ENCODE measurements at regions of chr1 and their contacts with region 1.

Region 1: DNA sequence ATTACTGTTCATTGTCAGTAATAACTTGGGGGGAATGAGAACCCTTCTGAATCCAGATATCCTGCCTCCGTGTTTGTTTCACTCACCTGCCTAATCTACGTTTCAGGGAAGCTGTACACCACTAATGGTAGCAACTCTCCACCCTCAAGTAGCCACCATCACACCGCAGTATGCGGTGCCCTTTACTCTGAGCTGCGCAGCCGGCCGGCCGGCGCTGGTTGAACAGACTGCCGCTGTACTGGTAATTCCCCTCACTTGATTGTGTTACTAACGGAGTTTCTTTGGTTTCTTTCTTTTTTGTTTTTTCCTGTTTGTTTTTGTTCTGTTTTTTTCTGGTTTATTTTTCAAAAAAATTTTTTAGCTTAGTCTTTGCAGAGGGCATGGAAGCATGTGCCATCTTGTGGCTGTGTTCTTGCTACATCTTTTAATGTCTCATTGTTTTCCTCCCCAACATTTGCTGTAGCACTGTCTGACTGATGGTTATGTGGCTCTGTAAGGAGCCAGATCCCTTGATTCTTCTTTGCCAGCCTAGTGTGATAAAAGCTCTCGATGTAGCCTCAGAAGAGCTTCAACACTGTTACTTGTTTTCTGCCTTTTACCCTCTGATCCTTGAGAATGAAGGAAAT is 15.9 kb upstream of the OLFML3 start:
- DNase-seq: no peak
- ATAC-seq: no peak
- H3K4me3 ChIP-seq: no peak overlapping the region
- H3K27ac ChIP-seq: no peak overlapping the region
- H3K4me1 ChIP-seq: no peaks in the 10 kb centered on the region
- H3K27me3 ChIP-seq: no peaks in the 10 kb centered on the region
- CTCF ChIP-seq: peak in 2 of 12 donors; percentile 6 to 11
- POLR2A ChIP-seq: no peak

Region 2: GRCh38 chr1:113415310-113416070 is 547.9 kb before region 1 on chr1:
- intact Hi-C with region 1: no loop called
- DNase-seq: no peak
- ATAC-seq: no peak
- H3K4me3 ChIP-seq: no peak overlapping the region
- H3K27ac ChIP-seq: no peak overlapping the region
- H3K4me1 ChIP-seq: peaks cover 0 to 17% (median 2%) of the 10 kb centered on the region in 12 donors
- H3K27me3 ChIP-seq: no peaks in the 10 kb centered on the region
- CTCF ChIP-seq: no peak
- POLR2A ChIP-seq: no peak

Region 3: DNA sequence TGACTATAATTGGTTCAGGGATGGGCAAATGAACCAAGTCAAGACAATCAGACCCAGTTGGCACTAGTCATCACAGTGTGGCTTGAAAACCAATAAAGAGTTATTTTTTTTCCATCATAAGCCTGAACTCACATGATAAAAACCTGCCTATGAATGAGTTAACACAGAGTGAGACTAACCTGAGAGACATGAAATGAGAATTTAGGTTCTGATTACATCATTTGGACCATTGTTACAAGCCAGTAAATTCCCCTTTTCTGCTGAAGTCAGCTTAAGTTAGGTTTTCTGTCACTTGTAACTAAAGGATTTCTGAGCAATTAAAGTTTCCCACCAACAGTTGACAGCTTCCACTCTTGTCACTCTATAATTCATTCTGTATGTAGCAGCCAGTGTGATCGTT is 141.5 kb before region 1 on chr1:
- intact Hi-C with region 1: loop called in 1 of 10 experiments (anchors 10 kb)
- DNase-seq: no peak
- ATAC-seq: no peak
- H3K4me3 ChIP-seq: no peak overlapping the region
- H3K27ac ChIP-seq: no peak overlapping the region
- H3K4me1 ChIP-seq: no peaks in the 10 kb centered on the region
- H3K27me3 ChIP-seq: no peaks in the 10 kb centered on the region
- CTCF ChIP-seq: no peak
- POLR2A ChIP-seq: no peak

Region 4: DNA sequence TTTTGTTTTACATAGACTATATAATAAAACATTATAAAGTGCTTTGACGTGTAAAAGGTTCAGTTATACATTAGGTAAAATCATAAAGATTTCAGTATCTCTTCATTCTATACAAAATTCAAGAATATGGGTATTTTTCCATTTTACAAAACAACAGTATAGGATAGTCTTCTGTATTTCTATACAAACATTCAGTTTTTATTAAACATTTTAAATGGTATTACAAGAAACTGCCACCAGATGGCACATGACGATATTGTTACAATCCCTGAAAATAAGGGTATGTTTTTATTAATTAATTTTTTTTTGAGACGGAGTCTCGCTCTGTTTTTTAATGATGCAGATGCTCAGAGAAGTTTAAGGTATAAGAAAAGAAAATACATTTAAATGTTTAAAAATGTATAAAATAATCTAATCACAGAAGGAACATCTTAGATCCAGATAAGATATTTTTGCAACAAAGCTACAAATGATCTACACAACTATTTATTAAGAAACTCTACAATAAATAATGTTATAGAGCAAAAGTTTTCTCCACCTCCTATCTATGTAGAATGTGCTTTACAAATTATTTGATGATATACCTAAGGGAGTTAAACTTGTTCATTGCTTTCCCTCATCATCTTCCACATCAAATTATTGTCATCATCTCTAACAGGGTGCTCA is 127.6 kb before region 1 on chr1:
- intact Hi-C with region 1: loop called in 2 of 10 experiments (anchors 5 kb)
- DNase-seq: no peak
- ATAC-seq: no peak
- H3K4me3 ChIP-seq: no peak overlapping the region
- H3K27ac ChIP-seq: no peak overlapping the region
- H3K4me1 ChIP-seq: peaks cover 0 to 5% (median 0%) of the 10 kb centered on the region in 12 donors
- H3K27me3 ChIP-seq: no peaks in the 10 kb centered on the region
- CTCF ChIP-seq: peak; percentile 49 to 78 (median 68)
- POLR2A ChIP-seq: no peak

Region 5: DNA sequence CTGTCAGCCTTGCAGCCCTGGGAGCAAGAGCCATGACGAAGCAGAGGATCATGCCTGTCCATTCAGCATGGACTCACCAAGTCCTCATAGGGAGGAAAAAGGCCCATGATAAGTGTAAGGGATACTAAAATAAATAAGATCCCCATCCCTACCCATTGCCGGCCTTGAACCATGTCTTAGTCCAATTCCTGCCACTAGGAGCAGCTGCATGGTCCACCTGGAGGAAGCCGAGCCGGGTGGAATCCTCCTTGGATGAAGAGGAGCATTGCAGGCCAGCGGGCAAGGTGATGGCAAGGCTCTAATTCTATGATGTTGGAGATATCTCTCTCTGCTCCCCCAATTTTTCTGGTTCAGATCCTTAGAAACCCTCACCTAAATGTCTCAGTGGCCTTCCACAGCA is 228.9 kb after region 1 on chr1:
- intact Hi-C with region 1: no loop called
- DNase-seq: no peak
- ATAC-seq: no peak
- H3K4me3 ChIP-seq: no peak overlapping the region
- H3K27ac ChIP-seq: no peak overlapping the region
- H3K4me1 ChIP-seq: no peaks in the 10 kb centered on the region
- H3K27me3 ChIP-seq: peaks cover 0 to 20% (median 0%) of the 10 kb centered on the region in 9 donors
- CTCF ChIP-seq: no peak
- POLR2A ChIP-seq: no peak